GM13976 (cell line): ENCODE measurements at regions of chr19 and their contacts with region 1.

Region 1: DNA sequence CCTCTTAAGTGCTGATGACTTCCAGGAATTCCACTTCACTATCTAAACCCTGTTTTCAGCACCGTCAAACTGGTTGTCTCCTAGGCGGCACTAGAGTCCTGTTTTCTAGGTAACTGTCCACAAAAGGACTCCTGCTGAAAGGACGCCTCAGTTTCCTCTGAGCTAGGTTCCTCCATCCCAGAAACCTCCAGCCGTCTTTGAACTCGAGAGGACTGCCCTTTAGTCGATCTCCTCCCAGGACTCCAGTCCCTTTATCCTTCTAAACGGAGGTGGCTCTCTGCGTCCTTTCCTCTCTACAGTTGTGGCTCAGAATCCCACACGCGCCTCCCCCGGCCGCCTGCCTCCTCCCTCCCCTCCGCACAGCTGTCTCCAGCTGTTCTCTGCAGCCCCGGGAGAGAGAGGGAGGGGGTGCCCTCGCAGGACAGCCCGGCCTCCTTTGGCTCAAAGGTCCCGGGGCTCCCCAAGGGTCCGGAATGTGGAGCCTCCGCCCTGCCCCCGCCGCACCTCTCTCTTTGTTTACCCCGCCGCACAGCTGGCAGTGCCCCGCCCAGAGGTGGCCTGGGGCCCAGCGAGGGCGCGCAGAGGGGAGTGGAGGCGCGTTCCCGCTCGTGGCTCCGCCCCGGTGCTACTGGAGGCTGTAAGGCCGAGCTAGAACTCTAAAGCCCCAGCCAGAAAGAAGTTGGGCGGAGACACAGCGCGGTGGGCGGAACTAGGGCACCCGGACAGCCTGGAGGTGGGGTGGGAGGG is 2.4 kb downstream of the LTBP4 start:
- DNase-seq: peak; percentile 93
- CTCF ChIP-seq: no peak

Region 2: DNA sequence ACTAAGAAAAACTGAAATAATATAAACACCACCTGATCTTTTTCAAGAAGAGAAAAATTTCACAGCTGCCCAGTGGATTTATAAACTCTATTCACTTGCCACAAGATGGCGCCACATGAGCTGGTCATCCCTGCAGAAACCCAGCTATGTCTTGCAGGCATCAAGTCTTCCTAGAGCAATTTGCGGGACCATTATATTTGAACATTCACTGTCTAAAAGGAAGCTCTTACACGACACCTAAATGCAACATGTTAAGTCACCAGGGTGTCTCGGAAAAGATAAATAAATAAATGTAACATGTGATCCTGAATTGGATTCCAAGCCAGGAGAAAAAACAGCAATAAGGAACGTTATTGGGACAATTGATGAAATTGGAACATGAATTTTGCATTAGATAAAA is 298.2 kb before region 1 on chr19:
- in situ Hi-C with region 1: loop called (anchors 25 kb)
- DNase-seq: peak; percentile 90
- CTCF ChIP-seq: peak; percentile 52

Region 3: DNA sequence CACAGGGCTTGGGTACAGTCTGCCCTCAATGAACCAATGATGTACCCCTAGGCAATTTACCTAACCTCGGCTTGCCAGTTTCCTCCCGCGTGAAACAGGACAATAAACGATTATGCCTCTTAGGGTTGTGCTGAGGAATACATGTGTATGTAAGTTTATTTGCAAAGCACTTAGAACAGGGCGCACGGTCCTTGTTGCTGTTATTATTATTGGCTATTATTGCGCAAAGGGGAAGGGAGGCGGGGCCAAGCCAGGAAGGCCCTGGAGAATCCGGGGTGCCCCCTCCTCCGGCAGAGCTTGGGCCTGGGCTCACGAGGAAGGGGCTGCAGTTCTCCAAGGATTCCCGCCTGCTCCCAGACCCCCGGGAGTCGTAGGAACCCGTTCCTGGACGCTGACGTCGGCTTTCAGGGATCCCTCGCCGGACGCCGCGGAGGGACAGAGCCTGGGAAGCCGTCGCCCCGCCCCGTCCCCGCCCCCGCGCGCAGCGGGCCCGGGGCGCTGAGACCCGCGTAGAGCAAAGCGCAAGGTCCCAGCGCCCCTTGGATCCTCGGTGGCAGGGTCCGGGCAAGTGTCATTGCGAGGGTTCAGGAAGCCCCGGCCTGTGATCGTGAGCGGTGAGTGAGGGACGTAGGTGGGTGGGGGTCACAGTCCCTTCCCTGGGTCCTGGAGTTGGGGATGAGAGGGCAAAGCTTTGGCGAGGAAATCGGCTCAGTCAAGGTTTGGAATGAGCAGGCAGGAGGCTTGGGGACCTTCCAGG is 772.9 kb after region 1 on chr19 and contains the start of gene TMEM91:
- in situ Hi-C with region 1: no loop called
- DNase-seq: no peak
- CTCF ChIP-seq: no peak